A673 (cell line): ENCODE measurements at regions of chr9 and their contacts with region 1.

Region 1: GRCh38 chr9:4315582-4316215 is 15.8 kb upstream of the GLIS3 start:
- DNase-seq: peak; percentile 82
- H3K4me3 ChIP-seq: no peak overlapping the region
- H3K27ac ChIP-seq: no peak overlapping the region
- H3K4me1 ChIP-seq: peaks cover 8% of the 10 kb centered on the region
- H3K27me3 ChIP-seq: no peaks in the 10 kb centered on the region
- CTCF ChIP-seq: peak; percentile 94

Region 2: DNA sequence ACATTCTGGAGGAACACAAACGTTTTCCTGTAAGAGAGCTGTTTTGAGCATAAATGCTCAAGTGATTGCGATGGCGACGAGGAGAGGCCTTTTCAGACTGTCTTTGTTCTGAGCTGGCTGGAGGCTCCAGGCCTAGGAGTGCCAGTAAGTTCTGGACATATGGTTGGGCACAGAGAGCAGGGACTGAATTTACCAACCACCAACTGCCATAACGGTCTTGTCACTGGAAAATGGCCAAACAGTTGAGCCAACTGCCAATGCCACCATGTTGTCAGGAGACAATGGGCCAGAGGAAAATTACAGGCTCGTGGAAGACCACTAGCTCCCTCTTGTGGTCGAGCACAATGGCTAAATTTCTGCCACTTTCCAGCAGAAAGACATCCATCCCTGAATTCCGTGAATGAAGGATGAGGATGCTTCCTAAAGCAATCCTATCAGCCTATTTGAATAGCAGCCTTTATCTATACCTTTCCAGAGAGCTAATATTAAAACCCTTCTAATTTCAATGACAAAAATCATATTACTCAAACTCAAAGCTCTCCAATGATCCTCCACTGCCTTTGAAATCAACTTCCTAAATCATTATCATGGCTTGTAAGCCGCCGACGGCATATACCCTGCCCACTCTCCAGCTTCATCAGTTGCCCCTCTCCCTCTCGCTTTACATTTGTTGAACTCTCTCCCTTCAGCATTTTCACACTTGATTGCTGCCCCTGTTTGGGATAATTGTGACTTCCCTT is 51.1 kb after region 1 on chr9:
- CTCF ChIA-PET with region 1: interaction called, 10 read pairs
- POLR2A ChIA-PET with region 1: no interaction called
- intact Hi-C with region 1: loop called (anchors 1 kb)
- DNase-seq: peak; percentile 65
- H3K4me3 ChIP-seq: no peak overlapping the region
- H3K27ac ChIP-seq: no peak overlapping the region
- H3K4me1 ChIP-seq: no peaks in the 10 kb centered on the region
- H3K27me3 ChIP-seq: no peaks in the 10 kb centered on the region
- CTCF ChIP-seq: peak; percentile 76

Region 3: DNA sequence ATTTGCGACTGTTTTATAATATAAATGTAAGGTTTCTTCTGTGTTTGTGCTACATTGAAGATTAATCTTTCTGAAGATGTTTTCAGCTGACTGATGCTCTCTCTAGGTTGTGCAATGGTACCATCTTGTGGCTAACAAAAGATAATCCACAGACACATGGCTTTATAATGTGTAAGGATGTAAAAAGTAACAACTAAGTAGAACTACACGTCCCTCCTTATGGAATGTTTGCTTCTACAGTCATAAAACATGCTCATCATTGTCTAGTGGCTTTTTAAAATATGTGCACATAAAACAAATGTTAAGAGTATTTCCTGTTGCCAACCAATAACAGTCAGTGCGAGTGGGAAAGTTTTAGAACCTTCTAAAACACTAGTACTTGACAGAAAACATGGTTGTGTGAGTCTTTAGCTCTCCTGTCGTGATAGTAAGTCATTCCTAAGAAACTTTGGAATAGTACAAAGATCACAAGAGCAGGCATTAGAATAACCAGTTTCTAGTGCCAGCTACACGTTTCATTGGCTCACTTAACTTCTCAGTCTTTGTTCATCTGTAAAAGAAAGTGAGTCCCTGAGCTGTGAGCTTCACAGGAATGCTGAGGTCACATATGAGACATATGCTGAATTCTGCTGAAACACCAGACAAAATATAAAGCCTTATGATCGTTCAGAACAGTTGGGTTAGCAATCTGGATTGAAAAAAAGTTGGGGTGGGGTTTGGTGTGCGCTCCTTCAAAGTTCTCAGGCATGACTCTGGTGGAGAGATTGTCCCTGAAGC is 59.9 kb after region 1 on chr9:
- CTCF ChIA-PET with region 1: interaction called, 7 read pairs
- POLR2A ChIA-PET with region 1: no interaction called
- intact Hi-C with region 1: loop called (anchors 2 kb)
- DNase-seq: peak; percentile 54
- H3K4me3 ChIP-seq: no peak overlapping the region
- H3K27ac ChIP-seq: no peak overlapping the region
- H3K4me1 ChIP-seq: no peaks in the 10 kb centered on the region
- H3K27me3 ChIP-seq: no peaks in the 10 kb centered on the region
- CTCF ChIP-seq: peak; percentile 57